Activated CD8-positive, alpha-beta memory T cell treated with anti-CD3 and anti-CD28 coated beads, Interleukin-2, amount 10 ng/mL, durations not matched to agents 7 days and 5 days (primary cell): ENCODE measurements at regions of chr17 and their contacts with region 1.

Region 1: GRCh38 chr17:74759243-74759801 is 10.9 kb downstream of the NHERF1 start:
- DNase-seq: peak; percentile 85
- ATAC-seq: peak; percentile 83
- H3K4me3 Mint-ChIP-seq: peak overlapping the region; percentile 67
- H3K27ac Mint-ChIP-seq: peak overlapping the region; percentile 88
- H3K4me1 Mint-ChIP-seq: peaks cover 70% of the 10 kb centered on the region
- H3K27me3 Mint-ChIP-seq: no peaks in the 10 kb centered on the region

Region 2: GRCh38 chr17:74742153-74742515 is 17.2 kb before region 1 on chr17:
- CTCF ChIA-PET with region 1: interaction called, 124 read pairs
- DNase-seq: peak; percentile 88
- ATAC-seq: peak; percentile 30
- H3K4me3 Mint-ChIP-seq: peak overlapping the region; percentile 43
- H3K27ac Mint-ChIP-seq: peak overlapping the region; percentile 91
- H3K4me1 Mint-ChIP-seq: peaks cover 84% of the 10 kb centered on the region
- H3K27me3 Mint-ChIP-seq: no peaks in the 10 kb centered on the region

Region 3: GRCh38 chr17:74748529-74749365 is 10.6 kb before region 1 on chr17 and contains the start of gene NHERF1:
- CTCF ChIA-PET with region 1: interaction called, 110 read pairs
- DNase-seq: peak; percentile 96
- ATAC-seq: peak; percentile 87
- H3K4me3 Mint-ChIP-seq: peak within 1 kb of the TSS; percentile 100
- H3K27ac Mint-ChIP-seq: peak within 1 kb of the TSS; percentile 85
- H3K4me1 Mint-ChIP-seq: peaks cover 54% of the 10 kb centered on the region
- H3K27me3 Mint-ChIP-seq: no peaks in the 10 kb centered on the region
- total RNA-seq, gene NHERF1: 284 to 377 TPM

Region 4: GRCh38 chr17:74776044-74776977 is 17.0 kb after region 1 on chr17 and contains the start of gene NAT9:
- CTCF ChIA-PET with region 1: interaction called, 206 read pairs
- DNase-seq: peak; percentile 98
- ATAC-seq: peak; percentile 85
- H3K4me3 Mint-ChIP-seq: peak within 1 kb of the TSS; percentile 99
- H3K27ac Mint-ChIP-seq: peak within 1 kb of the TSS; percentile 86
- H3K4me1 Mint-ChIP-seq: peaks cover 62% of the 10 kb centered on the region
- H3K27me3 Mint-ChIP-seq: no peaks in the 10 kb centered on the region
- total RNA-seq, gene NAT9: 34.1 to 34.5 TPM

Region 5: DNA sequence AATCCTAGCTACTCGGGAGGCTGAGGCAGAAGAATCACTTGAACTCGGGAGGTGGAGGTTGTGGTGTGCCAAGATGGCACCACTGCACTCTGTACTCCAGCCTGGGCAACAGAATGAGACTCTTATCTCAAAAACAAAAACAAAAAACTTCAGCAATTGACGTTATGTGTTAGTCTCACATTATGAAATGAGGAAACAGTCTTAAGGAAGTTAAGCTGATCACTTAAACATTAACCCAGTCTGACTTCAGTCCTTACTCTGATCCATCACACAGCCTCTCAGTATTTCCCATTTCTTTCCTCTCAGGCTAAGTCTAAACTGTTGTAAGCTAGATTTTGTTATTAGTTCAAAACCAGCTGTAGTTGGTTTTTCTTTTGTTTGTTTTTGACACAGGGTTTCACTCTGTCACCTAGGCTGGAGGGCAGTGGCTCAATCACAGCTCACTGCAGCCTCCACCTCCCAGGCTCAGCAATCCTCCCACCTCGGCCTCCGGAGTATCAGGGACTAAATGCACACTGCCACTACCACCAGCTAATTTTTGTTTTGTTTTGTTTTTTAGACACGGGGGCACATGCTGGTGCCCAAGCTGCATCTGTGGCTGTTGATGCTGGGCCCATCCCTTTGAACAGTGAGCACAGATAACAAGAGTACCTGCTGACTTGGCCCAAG is 388.7 kb after region 1 on chr17:
- CTCF ChIA-PET with region 1: no interaction called
- DNase-seq: no peak
- ATAC-seq: no peak
- H3K4me3 Mint-ChIP-seq: no peak overlapping the region
- H3K27ac Mint-ChIP-seq: peak overlapping the region; percentile 48
- H3K4me1 Mint-ChIP-seq: peaks cover 39% of the 10 kb centered on the region
- H3K27me3 Mint-ChIP-seq: no peaks in the 10 kb centered on the region